ENCODE measurements at regions of chr7 and their contacts with region 1.

Region 1: DNA sequence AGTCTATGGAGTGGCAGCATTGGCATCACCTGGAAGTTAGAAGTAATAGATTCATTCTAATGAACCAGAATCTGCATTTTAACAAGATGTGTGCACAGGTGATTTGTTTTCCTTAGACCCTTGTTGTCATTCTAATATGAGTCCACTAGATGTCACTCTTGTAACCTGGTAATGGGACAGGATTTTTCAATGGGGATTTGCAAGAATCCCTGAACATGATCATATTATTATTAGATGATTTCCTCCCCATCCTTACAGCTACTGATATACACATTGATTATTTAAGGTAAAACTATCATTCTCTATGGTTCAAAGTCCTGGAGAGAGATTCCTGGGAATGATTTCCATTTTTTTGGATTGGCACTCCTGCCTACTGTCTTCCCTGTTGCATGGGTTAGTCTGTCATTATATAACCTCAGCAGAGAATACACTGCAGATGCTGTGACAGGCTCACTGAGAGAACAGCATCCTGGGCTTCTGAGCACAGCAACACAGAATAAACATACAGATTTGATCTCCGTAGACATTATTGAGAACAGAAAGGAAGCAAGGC is 194.9 kb downstream of the SUGCT start:
- DNase-seq: no peak
- H3K4me3 ChIP-seq: no peak overlapping the region
- H3K27ac ChIP-seq: no peak overlapping the region
- H3K4me1 ChIP-seq: no peaks in the 10 kb centered on the region
- H3K27me3 ChIP-seq: no peaks in the 10 kb centered on the region
- CTCF ChIP-seq: peak; percentile 64 to 85 (median 76)
- POLR2A ChIP-seq: no peak

Region 2: DNA sequence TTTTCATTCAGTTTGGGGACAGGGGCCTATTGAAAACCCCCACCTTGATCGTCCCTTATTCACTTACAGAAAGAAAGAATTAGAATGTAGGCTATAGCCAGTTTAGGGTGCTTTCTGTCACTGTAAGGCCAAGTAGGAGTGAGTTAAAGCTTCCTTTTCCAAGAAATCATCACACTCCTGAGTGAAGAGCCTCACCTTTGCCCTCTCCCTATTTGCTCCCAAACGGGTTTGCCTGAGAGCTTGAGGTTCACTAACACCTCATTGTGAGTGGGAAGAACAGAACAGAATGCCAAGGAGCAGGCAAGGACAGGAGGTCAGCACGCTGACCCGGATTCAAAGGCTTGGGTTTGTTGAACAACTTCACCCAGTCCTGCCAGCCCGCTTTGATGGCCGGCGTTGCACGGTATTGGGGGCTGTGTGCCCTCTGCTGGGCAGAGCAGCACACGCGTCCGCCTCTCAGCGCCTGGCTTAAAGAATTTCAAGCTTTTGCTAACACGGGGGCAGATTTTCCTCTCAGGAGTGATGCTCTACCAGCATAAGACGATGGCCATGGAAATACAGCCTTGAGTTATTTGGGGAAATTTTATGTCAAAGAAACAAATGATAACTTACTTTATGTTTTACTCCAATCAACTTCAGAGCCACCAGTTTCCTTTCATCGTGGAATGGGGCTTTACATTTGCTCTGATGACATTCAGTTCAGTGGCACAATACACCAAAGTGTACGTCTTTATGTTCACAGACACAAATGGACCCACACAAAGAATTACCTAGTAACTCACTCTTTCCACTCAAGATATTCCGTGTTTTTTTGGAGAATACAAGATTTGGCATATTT is 275.1 kb after region 1 on chr7:
- intact Hi-C with region 1: loop called (anchors 10 kb)
- DNase-seq: peak; percentile 41 to 76 (median 67)
- H3K4me3 ChIP-seq: no peak overlapping the region
- H3K27ac ChIP-seq: no peak overlapping the region
- H3K4me1 ChIP-seq: peaks cover 0 to 3% of the 10 kb centered on the region in 2 donors
- H3K27me3 ChIP-seq: no peaks in the 10 kb centered on the region
- CTCF ChIP-seq: peak; percentile 46 to 74 (median 66)
- POLR2A ChIP-seq: no peak

Region 3: GRCh38 chr7:40833888-40834234 is 504.2 kb after region 1 on chr7:
- intact Hi-C with region 1: no loop called
- DNase-seq: no peak
- H3K4me3 ChIP-seq: no peak overlapping the region
- H3K27ac ChIP-seq: no peak overlapping the region
- H3K4me1 ChIP-seq: no peaks in the 10 kb centered on the region
- H3K27me3 ChIP-seq: no peaks in the 10 kb centered on the region
- CTCF ChIP-seq: no peak
- POLR2A ChIP-seq: no peak

Region 4: DNA sequence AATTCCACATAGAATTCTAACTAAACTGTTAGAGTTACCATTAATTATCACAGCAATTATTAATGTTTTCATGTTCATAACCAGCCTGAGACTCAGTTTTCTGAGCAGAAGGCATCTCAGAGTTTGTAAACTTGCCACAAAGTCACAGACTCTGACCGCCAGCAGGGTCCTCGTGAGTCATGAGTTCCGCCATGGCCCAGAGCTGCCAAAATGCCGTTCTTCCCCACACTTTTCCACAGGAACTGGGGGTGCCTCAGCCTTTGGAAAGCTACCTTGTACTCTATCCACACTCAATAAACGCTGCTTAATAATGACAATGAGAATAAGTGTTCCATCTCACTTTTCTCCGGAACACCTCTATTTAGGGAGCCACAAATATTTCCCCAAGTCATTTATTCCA is 1395.3 kb after region 1 on chr7:
- intact Hi-C with region 1: loop called in 1 of 2 experiments (anchors 10 kb)
- DNase-seq: no peak
- H3K4me3 ChIP-seq: no peak overlapping the region
- H3K27ac ChIP-seq: no peak overlapping the region
- H3K4me1 ChIP-seq: no peaks in the 10 kb centered on the region
- H3K27me3 ChIP-seq: no peaks in the 10 kb centered on the region
- CTCF ChIP-seq: no peak
- POLR2A ChIP-seq: no peak

Measured in adrenal gland (tissue), 19 donors.